Sciatic nerve (tissue), 2 donors: ENCODE measurements at regions of chr6 and their contacts with region 1.

Region 1: GRCh38 chr6:29051680-29052079 is 6.7 kb upstream of the OR2W1 start:
- DNase-seq: no peak
- ATAC-seq: no peak

Region 2: DNA sequence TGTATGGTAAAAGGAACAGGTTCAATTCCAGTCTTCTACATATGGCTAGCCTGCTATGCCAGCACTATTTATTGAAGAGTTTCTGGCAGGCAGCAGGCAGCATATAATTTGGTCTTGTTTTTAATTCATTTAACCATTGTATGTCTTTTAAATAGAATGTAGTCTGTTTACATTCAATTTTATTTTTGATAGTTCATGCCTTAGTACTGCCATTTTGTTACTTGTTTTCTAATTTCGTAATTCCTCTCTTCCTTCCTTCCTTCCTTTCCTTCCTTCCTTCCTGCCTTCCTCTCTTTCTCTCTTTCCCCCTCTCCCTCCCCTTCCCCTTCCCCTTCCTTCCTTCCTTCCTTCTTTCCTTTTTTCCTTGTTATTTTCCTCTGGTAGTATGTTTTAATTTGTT is 101.4 kb after region 1 on chr6:
- intact Hi-C with region 1: loop called (anchors 2 kb)
- DNase-seq: no peak
- ATAC-seq: no peak